ENCODE measurements at regions of chr4 and their contacts with region 1.

Region 1: GRCh38 chr4:99383833-99384392 is 31.4 kb upstream of the ADH1C start:
- DNase-seq: peak; percentile 71 to 84
- H3K4me3 ChIP-seq: no peak overlapping the region
- H3K27ac ChIP-seq: peak overlapping the region; percentile 81 to 85
- H3K4me1 ChIP-seq: peaks cover 0 to 30% (median 4%) of the 10 kb centered on the region in 4 donors
- H3K27me3 ChIP-seq: no peaks in the 10 kb centered on the region
- CTCF ChIP-seq: no peak

Region 2: DNA sequence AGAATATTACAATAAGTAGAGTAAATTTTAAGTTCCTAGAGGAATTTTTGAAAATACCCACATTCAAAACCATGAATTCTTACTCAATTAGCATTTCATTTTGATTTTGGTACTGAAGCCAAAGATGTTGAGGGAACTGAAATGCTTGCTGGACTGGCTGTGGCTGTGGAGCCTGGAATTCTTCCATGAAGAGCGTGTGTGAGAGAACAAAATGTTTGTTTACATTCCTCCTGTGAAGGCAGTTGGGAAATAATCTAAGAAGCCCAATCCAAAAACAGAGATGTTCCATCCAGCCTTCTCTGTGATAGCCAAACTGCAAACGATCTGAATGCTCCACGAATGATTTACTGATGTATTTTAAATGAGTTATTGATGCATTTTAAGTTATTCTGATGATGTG is 58.9 kb before region 1 on chr4:
- intact Hi-C with region 1: loop called (anchors 10 kb)
- DNase-seq: peak; percentile 82 to 89
- H3K4me3 ChIP-seq: no peak overlapping the region
- H3K27ac ChIP-seq: peak overlapping the region; percentile 78 to 79
- H3K4me1 ChIP-seq: peaks cover 0 to 53% (median 17%) of the 10 kb centered on the region in 4 donors
- H3K27me3 ChIP-seq: no peaks in the 10 kb centered on the region
- CTCF ChIP-seq: no peak

Region 3: DNA sequence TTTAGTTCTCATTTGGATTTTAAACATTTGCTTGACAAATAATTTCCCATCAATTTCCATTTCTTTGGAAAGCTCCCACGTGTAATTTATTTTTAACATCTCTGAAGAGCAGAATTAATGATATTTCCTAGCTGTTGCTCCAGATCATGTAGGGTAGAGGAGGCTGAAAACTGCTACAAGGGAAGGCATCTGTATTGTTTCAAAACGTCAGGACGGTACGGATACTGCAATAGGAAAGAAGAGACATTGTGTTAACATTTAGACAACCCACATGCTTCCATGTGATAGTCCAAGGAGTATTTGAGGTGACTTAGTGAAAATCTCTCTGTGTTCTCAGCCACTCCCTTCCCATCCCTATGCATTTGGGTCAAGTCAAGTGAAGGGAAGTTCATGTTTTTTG is 47.4 kb before region 1 on chr4:
- intact Hi-C with region 1: no loop called
- DNase-seq: no peak
- H3K4me3 ChIP-seq: no peak overlapping the region
- H3K27ac ChIP-seq: no peak overlapping the region
- H3K4me1 ChIP-seq: peaks cover 0 to 14% (median 0%) of the 10 kb centered on the region in 4 donors
- H3K27me3 ChIP-seq: no peaks in the 10 kb centered on the region
- CTCF ChIP-seq: no peak

Region 4: DNA sequence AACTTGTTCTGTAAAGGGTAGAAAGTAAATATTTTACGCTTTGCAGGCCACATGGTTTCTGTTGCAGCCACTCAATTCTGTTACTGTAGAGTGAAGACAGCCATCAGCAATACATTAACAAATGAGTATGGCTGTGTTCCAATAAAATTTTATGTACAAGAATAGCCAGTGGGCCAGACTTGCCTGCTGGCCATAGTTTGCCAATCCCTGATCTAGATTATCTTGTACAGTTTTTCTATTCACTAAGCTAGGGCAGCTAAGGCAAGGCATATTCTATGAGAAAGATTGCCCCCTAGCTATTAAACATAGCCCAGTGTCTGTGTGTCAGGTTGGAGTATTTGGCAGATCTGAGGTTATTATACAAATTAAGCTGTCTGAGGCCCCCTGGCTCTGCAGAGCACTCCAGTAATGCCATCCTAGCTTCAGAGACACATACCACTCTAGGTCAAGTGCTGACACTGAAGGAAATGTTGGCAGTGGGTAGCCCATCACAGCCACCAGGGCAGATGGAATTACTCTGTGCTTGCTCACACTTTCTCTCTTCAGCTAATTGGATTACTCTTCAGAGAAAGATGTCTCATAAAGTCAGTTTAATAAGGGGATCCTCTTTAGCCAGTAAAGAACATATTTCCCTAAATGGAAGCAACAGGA is 231.4 kb after region 1 on chr4:
- intact Hi-C with region 1: no loop called
- DNase-seq: no peak
- H3K4me3 ChIP-seq: no peak overlapping the region
- H3K27ac ChIP-seq: no peak overlapping the region
- H3K4me1 ChIP-seq: peaks cover 0 to 23% (median 11%) of the 10 kb centered on the region in 4 donors
- H3K27me3 ChIP-seq: no peaks in the 10 kb centered on the region
- CTCF ChIP-seq: no peak

Measured in tibial artery (tissue), 4 donors.